Dendritic cell treated with granulocyte-macrophage colony-stimulating factor and Interleukin-4, amounts not matched to agents 40 ng/mL and 50 ng/mL, for 4 days (primary cell): ENCODE measurements at regions of chr9 and their contacts with region 1.

Region 1: GRCh38 chr9:36543916-36544315 is 28.8 kb upstream of the MELK start:
- H3K4me3 Mint-ChIP-seq: no peak overlapping the region
- H3K27ac Mint-ChIP-seq: no peak overlapping the region
- H3K4me1 Mint-ChIP-seq: no peaks in the 10 kb centered on the region
- H3K27me3 Mint-ChIP-seq: peaks cover 2% of the 10 kb centered on the region

Region 2: GRCh38 chr9:36461323-36461722 is 82.6 kb before region 1 on chr9:
- intact Hi-C with region 1: loop called (anchors 5 kb)
- H3K4me3 Mint-ChIP-seq: no peak overlapping the region
- H3K27ac Mint-ChIP-seq: no peak overlapping the region
- H3K4me1 Mint-ChIP-seq: peaks cover 30% of the 10 kb centered on the region
- H3K27me3 Mint-ChIP-seq: no peaks in the 10 kb centered on the region

Region 3: DNA sequence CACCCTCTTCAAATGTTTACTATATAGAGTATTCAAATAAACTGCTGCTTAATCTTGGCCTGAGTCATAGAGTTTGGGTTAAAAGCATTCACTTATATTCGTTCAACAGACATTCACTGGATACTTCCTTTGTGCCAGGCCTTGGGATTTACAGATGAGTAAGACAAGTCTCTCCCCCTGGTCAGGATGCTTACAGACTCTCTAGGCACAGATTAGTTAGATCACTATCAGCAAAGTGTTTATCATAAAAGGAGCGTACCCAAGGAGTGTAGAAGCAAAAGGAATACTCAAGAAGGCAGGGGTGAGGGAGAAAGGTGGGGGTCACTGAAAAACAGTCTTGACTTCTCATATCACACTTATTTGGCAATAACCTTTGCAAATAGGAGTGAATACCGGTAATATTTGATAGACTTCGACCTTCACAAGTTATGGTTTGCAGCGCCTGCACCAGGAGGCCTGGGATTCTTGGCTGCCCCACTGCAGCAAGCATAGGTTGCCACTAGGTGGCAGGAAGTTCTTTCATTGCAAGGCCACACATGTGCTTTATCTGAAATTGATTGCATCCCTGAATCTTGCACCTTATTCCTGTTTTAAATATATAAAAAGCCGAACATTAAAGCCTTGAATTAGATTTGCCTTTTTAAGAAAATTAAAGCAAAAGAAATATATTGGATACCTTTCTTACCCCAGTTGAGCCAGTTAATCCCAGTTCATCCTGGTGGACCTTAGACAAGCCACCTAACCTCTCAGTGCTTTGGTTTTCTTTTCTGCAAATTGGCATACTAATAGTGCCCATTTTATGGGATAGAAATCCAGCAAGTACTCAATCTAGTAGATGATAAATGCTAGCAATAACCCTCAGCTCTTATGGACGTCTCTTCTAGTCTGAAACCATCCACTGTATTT is 1203.2 kb after region 1 on chr9:
- intact Hi-C with region 1: no loop called
- H3K4me3 Mint-ChIP-seq: no peak overlapping the region
- H3K27ac Mint-ChIP-seq: no peak overlapping the region
- H3K4me1 Mint-ChIP-seq: no peaks in the 10 kb centered on the region
- H3K27me3 Mint-ChIP-seq: no peaks in the 10 kb centered on the region